ENCODE measurements at regions of chr17 and their contacts with region 1.

Region 1: GRCh38 chr17:75393523-75394331 is 11.8 kb downstream of the GRB2 start:
- DNase-seq: peak; percentile 99
- ATAC-seq: peak; percentile 100

Region 2: DNA sequence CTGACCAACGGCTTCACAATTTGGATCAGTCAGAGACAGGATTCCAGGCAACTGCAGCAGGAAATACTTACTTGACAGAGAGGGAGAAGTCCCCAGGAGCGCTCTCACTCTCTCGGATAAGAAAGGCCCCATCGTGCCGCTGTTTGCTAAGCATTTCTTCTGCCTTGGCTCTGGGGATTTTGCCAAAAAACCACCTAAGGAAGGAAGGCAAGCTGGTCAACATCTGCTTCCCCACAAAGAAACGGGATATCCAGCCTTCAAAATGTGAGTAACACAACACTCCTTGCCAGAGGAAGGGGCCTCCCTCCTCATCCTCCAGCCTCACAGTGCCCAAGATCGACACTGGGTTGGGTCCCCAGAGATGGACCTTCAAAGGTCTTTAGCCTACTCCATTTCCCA is 67.9 kb before region 1 on chr17:
- intact Hi-C with region 1: loop called (anchors 5 kb)
- DNase-seq: no peak
- ATAC-seq: peak; percentile 33

Measured in left ventricle myocardium superior (tissue), 1 donor.